Caco-2 (cell line): ENCODE measurements at regions of chr15 and their contacts with region 1.

Region 1: DNA sequence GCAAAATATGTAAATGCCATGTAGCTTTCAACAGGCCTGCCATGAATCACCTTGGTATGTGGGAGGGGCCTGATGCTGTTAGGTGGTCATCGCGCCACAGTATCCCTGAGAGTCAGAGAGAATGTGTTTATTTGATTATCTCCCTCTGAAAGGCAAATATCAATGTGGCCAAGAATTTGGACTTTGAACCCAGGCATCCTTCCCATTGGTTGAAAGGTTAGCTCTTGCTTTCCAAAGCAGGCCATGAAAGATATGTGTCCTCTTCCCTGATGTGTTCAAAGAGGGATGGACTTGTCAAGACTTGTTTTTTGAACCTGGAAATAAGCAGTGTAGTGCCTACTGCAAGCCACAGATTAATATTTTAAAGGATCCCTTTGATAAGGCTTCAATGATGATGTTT is 36.7 kb downstream of the SRP14 start:
- DNase-seq: peak; percentile 89 to 94
- H3K4me3 ChIP-seq: no peak overlapping the region
- H3K4me3 Mint-ChIP-seq: peak overlapping the region; percentile 57
- H3K27ac Mint-ChIP-seq: no peak overlapping the region
- H3K4me1 ChIP-seq: peaks cover 27% of the 10 kb centered on the region
- H3K4me1 Mint-ChIP-seq: peaks cover 13% of the 10 kb centered on the region
- H3K27me3 ChIP-seq: no peaks in the 10 kb centered on the region
- H3K27me3 Mint-ChIP-seq: no peaks in the 10 kb centered on the region
- CTCF ChIP-seq: no peak

Region 2: DNA sequence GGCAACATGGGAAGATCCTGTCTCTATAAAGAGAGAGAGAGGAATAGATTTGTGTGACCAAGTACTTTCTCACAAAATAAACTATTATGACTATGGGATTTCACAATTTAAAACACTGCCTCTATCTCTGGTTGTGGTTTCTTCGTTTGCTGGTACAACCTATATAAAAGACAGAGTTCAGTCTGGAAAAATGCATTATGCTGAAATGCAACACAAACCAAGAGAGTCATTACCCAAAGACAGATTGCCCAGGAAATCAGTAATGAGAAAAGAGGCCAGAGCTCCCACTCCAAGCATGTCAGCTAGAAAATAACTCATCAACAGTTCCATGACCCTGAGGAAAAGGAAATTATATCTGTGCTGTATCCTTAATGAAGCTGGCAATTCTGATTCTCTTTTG is 105.4 kb before region 1 on chr15:
- CTCF ChIA-PET with region 1: no interaction called
- POLR2A ChIA-PET with region 1: no interaction called
- intact Hi-C with region 1: loop called (anchors 10 kb)
- DNase-seq: no peak
- H3K4me3 ChIP-seq: no peak overlapping the region
- H3K4me3 Mint-ChIP-seq: no peak overlapping the region
- H3K27ac Mint-ChIP-seq: no peak overlapping the region
- H3K4me1 ChIP-seq: peaks cover 11% of the 10 kb centered on the region; the same call in 1 of the 2 replicates
- H3K4me1 Mint-ChIP-seq: peaks cover 12% of the 10 kb centered on the region
- H3K27me3 ChIP-seq: no peaks in the 10 kb centered on the region
- H3K27me3 Mint-ChIP-seq: no peaks in the 10 kb centered on the region
- CTCF ChIP-seq: no peak